CD4-positive, alpha-beta T cell (primary cell): ENCODE measurements at regions of chr14 and their contacts with region 1.

Region 1: DNA sequence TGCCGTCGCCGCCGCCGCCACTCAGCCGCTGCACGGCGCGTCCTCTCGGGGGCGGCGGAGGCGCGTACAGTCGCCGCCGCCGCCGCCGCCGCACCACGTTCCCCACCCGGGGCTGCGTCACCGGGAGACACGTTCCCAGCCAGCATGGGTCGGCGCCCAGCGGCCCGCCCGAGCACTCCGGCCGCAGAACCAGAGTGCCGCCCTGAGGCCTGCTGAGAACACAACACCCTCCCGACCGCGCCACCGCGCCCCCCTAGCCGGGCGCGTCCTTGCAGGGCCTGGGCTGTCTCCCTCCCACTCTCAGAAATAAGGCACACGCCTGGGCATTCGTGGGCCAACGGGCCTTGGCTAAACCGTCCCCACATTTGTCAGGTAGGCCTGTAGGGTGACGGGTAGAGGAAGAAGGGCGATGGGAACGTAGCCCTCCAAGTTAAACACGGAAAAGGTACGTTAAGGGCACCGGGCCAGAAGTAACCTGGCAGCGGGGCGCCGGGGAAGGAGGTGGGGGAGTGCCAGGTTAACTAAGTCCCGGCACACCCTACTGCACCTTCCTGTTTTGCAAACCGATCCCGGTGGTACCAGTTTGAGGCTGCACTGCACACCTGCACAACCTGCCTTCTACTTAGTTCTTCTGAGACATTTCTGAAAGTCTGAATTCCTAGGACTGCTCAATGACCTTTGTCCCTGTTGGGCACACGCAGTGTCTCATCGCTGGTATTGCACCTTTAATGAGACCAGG is at the start of gene MAP4K5:
- DNase-seq: peak; percentile 77 to 95 (median 86)
- ATAC-seq: peak; percentile 92
- H3K4me3 ChIP-seq: peak within 1 kb of the TSS; percentile 87
- H3K4me3 Mint-ChIP-seq: peak within 1 kb of the TSS; percentile 95
- H3K27ac ChIP-seq: peak within 1 kb of the TSS; percentile 53 to 57
- H3K27ac Mint-ChIP-seq: peak within 1 kb of the TSS; percentile 86
- H3K4me1 ChIP-seq: peaks cover 23% of the 10 kb centered on the region
- H3K4me1 Mint-ChIP-seq: peaks cover 55% of the 10 kb centered on the region
- H3K27me3 ChIP-seq: no peaks in the 10 kb centered on the region
- H3K27me3 Mint-ChIP-seq: no peaks in the 10 kb centered on the region
- CTCF ChIP-seq: peak; percentile 66
- total RNA-seq, gene MAP4K5: 32.4 to 34.5 TPM

Region 2: DNA sequence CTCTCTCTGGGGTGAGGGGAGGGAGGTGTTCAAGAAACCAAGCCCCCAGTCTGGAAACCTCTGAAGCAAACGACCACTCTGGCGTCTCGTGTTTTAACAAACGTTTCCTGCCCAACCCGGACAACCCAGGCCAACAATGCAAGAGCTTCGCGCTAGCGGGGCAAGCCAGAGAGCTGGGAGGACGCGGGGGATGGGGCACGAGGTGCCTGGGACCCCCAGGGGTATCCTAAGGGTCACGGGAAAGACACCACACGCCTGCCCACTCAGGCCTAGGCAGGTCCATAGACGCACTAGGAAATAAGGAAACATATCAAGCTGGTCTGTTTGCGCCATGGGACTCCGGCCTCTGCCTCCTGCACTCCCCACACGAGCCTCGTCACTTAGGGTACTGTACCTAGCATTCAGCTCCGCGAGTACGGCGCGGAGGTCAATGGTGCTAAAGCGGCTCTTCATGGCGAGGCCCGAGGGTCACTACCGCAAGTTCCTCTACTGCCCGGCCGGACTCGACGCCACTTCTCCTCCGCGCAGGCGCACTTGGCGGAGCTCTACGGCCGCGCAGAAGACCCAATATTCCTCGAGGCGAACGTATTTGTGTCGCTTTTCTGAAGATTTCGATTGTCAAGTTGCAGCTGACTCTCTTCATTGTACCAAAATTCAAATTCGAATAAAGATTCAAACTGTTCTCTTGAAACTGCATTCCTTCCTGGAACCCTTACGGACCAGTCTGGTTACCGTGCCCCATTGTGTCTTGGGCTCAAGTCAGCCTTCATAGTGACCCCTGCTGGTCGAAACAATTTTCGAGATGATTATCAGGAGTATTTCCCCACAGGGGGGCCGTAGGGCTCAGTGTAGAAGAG is 680.1 kb before region 1 on chr14 and contains the start of gene NEMF:
- CTCF ChIA-PET with region 1: no interaction called
- POLR2A ChIA-PET with region 1: no interaction called
- intact Hi-C with region 1: loop called in 1 of 2 experiments (anchors 5 kb)
- DNase-seq: peak; percentile 67 to 91 (median 72)
- ATAC-seq: peak; percentile 75
- H3K4me3 ChIP-seq: peak within 1 kb of the TSS; percentile 97
- H3K4me3 Mint-ChIP-seq: peak within 1 kb of the TSS; percentile 99
- H3K27ac ChIP-seq: peak within 1 kb of the TSS; percentile 64 to 80
- H3K27ac Mint-ChIP-seq: peak within 1 kb of the TSS; percentile 91
- H3K4me1 ChIP-seq: peaks cover 17% of the 10 kb centered on the region
- H3K4me1 Mint-ChIP-seq: peaks cover 46% of the 10 kb centered on the region
- H3K27me3 ChIP-seq: no peaks in the 10 kb centered on the region
- H3K27me3 Mint-ChIP-seq: no peaks in the 10 kb centered on the region
- CTCF ChIP-seq: peak; percentile 89
- total RNA-seq, gene NEMF: 96.0 to 97.7 TPM

Region 3: DNA sequence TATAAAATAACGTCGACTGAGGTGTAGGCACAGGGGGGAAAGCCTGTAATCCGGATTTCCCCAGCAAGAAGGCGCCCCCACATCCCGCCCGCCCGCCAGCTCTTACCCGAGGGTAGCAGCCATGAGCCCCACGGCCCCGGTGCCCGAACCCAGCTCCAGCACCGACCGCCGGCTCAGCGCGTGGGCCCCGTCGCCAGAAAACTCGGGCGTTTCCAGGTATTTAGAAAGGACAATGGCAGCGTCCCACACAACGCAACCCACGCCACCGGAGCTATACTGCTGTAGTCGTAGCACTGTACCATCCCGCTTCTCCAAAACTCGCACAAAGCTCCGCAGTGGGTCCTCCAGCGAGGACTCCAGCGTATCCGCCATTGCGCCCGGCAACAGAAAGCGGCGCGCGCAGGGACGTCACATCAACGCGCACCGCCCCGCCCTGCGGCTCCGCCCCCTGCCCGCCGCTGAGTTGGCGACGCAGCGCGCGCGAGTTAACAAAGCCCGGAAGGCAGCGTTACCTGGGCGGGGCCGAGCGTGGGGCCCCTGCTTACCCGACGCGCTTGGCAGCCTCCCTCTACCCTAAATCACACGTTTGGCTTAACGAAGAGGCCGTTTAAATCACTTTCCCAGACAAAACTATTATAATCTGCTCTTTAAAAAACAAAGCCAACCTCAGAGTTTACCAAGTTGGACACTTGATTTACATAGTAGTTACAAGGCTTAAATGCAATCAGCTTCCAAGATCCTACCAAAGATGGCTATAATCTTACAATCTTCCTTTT is 416.3 kb before region 1 on chr14 and contains the start of gene VCPKMT:
- CTCF ChIA-PET with region 1: interaction called, 4 read pairs
- POLR2A ChIA-PET with region 1: no interaction called
- intact Hi-C with region 1: loop called (anchors 5 kb)
- DNase-seq: peak; percentile 90 to 98 (median 96)
- ATAC-seq: peak; percentile 98
- H3K4me3 ChIP-seq: peak within 1 kb of the TSS; percentile 75
- H3K4me3 Mint-ChIP-seq: peak within 1 kb of the TSS; percentile 99
- H3K27ac ChIP-seq: peak within 1 kb of the TSS; percentile 81 to 95
- H3K27ac Mint-ChIP-seq: peak within 1 kb of the TSS; percentile 99
- H3K4me1 ChIP-seq: peaks cover 15% of the 10 kb centered on the region
- H3K4me1 Mint-ChIP-seq: peaks cover 31% of the 10 kb centered on the region
- H3K27me3 ChIP-seq: no peaks in the 10 kb centered on the region
- H3K27me3 Mint-ChIP-seq: no peaks in the 10 kb centered on the region
- CTCF ChIP-seq: no peak
- total RNA-seq, gene VCPKMT: 30.4 to 32.4 TPM

Region 4: GRCh38 chr14:50231475-50232275 is 301.0 kb before region 1 on chr14 and contains the start of gene SOS2:
- CTCF ChIA-PET with region 1: no interaction called
- POLR2A ChIA-PET with region 1: no interaction called
- intact Hi-C with region 1: loop called in 1 of 2 experiments (anchors 5 kb)
- DNase-seq: peak; percentile 66 to 91 (median 81)
- ATAC-seq: peak; percentile 80
- H3K4me3 ChIP-seq: peak within 1 kb of the TSS; percentile 85
- H3K4me3 Mint-ChIP-seq: peak within 1 kb of the TSS; percentile 91
- H3K27ac ChIP-seq: peak within 1 kb of the TSS; percentile 83 to 86
- H3K27ac Mint-ChIP-seq: peak within 1 kb of the TSS; percentile 92
- H3K4me1 ChIP-seq: peaks cover 24% of the 10 kb centered on the region
- H3K4me1 Mint-ChIP-seq: peaks cover 57% of the 10 kb centered on the region
- H3K27me3 ChIP-seq: no peaks in the 10 kb centered on the region
- H3K27me3 Mint-ChIP-seq: no peaks in the 10 kb centered on the region
- CTCF ChIP-seq: no peak
- total RNA-seq, gene SOS2: 53.8 to 56.7 TPM

Region 5: DNA sequence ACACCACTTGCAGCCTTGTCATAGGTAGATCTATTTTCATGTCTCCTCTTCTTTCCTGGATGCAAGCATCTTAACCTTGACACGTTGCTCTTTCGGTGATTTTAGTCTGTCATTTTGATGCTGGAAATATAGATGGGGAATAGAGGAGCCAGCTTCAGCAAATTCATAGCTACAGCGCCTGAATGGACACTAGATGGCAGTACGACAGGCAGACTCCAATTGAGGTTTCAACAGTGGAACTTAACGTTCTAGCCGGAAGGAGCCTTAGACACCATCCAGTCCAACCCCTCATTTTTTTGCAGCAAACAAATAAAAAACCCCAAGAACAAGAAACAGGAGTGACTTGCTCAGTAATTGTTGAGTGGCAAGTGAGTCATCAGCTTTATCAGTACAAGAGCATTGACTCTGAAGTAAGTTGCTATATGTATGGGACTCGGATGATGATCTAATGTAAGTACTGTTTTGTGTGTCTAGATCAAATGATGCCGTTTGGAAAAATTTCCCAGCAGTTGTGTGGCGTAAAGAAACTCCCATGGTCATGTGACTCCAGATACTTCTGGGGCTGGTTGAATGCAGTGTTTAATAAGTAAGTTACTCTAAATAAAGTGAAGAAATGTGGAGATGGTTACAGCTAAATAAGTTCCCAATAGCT is 211.5 kb before region 1 on chr14:
- CTCF ChIA-PET with region 1: interaction called, 9 read pairs
- POLR2A ChIA-PET with region 1: interaction called, 14 read pairs
- intact Hi-C with region 1: loop called in 1 of 2 experiments (anchors 1 kb)
- DNase-seq: peak; percentile 29 to 93 (median 54)
- ATAC-seq: peak; percentile 96
- H3K4me3 ChIP-seq: peak overlapping the region; percentile 9
- H3K4me3 Mint-ChIP-seq: no peak overlapping the region
- H3K27ac ChIP-seq: peak overlapping the region in 1 of 2 donors; percentile 16
- H3K27ac Mint-ChIP-seq: no peak overlapping the region
- H3K4me1 ChIP-seq: peaks cover 8% of the 10 kb centered on the region
- H3K4me1 Mint-ChIP-seq: peaks cover 27% of the 10 kb centered on the region
- H3K27me3 ChIP-seq: no peaks in the 10 kb centered on the region
- H3K27me3 Mint-ChIP-seq: no peaks in the 10 kb centered on the region
- CTCF ChIP-seq: peak; percentile 87

Region 6: GRCh38 chr14:50521912-50522341 is 10.7 kb before region 1 on chr14:
- CTCF ChIA-PET with region 1: interaction called, 8 read pairs
- POLR2A ChIA-PET with region 1: interaction called, 7 read pairs
- intact Hi-C with region 1: loop called in 1 of 2 experiments (anchors 1 kb)
- DNase-seq: peak in 2 of 14 experiments; percentile 23 to 53
- ATAC-seq: peak; percentile 60
- H3K4me3 ChIP-seq: peak overlapping the region; percentile 4
- H3K4me3 Mint-ChIP-seq: peak overlapping the region; percentile 72
- H3K27ac ChIP-seq: peak overlapping the region in 1 of 2 donors; percentile 19
- H3K27ac Mint-ChIP-seq: peak overlapping the region; percentile 64
- H3K4me1 ChIP-seq: peaks cover 15% of the 10 kb centered on the region
- H3K4me1 Mint-ChIP-seq: peaks cover 52% of the 10 kb centered on the region
- H3K27me3 ChIP-seq: no peaks in the 10 kb centered on the region
- H3K27me3 Mint-ChIP-seq: no peaks in the 10 kb centered on the region
- CTCF ChIP-seq: no peak